Aorta (tissue), 5 donors: ENCODE measurements at regions of chr14 and their contacts with region 1.

Region 1: GRCh38 chr14:37874429-37875191 is 279.2 kb downstream of the TTC6 start:
- DNase-seq: peak; percentile 84 to 93
- ATAC-seq: peak; percentile 91
- H3K4me3 ChIP-seq: no peak overlapping the region
- H3K27ac ChIP-seq: no peak overlapping the region
- H3K4me1 ChIP-seq: no peaks in the 10 kb centered on the region
- H3K27me3 ChIP-seq: no peaks in the 10 kb centered on the region

Region 2: DNA sequence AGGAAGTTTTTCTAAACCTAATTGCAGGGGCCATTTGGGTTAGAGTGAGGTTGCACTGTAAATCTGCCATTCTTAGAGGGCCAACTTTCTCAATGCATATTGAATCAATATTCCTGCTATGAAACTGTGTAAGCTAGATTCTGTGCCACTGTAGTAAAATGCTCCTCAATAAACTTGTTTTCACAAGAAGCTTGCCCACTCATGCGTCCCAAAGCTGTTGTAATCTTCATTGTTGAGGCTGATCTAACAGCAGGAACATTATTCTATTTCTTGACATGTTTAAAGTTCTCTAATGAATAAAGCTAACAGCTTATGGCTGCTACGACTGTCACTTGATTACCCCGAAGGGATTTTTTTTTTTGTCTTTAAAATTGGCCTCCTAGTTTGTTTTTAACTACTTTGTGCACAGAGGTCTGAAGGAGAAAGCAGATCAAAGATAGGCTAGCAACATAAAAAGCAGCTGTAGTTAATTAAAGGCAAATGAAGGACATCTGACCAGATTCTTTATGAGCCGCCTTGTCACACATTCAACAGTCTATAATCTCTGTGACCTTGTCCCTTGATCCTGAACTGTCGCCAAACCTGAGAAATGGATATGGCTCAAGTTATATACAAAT is 969.2 kb before region 1 on chr14:
- intact Hi-C with region 1: no loop called
- DNase-seq: no peak
- ATAC-seq: no peak
- H3K4me3 ChIP-seq: no peak overlapping the region
- H3K27ac ChIP-seq: no peak overlapping the region
- H3K4me1 ChIP-seq: no peaks in the 10 kb centered on the region
- H3K27me3 ChIP-seq: no peaks in the 10 kb centered on the region

Region 3: DNA sequence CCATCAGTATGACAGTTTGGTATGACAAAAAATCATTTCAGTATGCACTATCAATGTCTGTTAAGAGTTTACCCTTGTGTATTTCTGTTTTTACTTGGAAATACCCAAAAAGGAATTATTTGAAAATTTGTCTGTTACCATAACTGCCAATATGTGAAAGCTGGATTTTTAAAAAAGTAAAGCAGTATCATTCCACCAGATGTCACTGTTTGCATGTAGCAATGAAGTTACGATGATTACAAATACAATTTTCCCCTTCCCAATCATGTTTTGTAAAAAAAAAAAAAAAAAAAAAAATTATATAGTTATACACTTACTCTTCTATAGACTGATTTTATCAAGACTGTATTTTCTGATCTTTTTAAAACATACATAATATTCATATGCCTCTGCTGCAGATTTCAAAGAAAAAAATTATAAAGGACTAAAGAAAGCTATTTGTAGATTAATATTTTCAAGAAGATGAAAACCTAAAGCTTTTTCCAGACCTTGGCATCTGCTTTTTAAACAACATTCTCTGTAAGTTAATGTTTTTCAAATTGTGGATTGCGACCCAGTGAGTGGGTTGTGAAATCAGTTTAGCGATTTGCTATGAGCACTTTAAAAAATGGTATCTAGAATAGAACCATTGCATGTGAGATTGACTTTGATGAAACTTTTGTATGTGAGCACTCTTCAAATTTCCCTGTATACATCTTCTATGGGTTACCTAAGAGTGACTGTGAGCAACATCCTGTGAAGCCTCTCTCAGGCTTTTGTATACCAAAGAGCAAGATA is 165.0 kb before region 1 on chr14:
- intact Hi-C with region 1: loop called (anchors 2 to 10 kb)
- DNase-seq: no peak
- ATAC-seq: no peak
- H3K4me3 ChIP-seq: no peak overlapping the region
- H3K27ac ChIP-seq: no peak overlapping the region
- H3K4me1 ChIP-seq: no peaks in the 10 kb centered on the region
- H3K27me3 ChIP-seq: no peaks in the 10 kb centered on the region